BJ (cell line): ENCODE measurements at regions of chr12 and their contacts with region 1.

Region 1: DNA sequence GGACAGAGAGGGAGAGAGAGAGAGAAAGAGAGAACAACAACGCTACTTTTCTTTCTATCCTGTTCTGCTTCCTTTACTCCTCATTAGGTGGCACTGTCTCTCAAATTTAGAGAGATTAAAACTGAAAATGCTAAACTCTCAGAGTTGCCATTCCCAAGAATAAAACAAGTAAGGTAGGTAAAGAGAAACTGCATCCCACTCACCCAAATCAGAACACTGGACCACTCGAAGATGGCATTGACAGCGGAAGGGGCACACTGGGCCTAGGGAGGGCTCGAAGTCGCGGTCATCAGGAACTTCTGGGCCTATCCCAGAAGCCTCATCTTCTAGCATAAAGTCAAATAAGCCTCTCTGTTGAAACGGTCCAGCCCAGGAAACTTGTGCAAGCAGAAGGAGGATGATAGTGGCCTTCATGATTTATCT is 4.5 kb downstream of the DCN start:
- DNase-seq: no peak
- H3K4me3 ChIP-seq: peak overlapping the region; percentile 35
- H3K27me3 ChIP-seq: no peaks in the 10 kb centered on the region
- CTCF ChIP-seq: peak; percentile 67

Region 2: DNA sequence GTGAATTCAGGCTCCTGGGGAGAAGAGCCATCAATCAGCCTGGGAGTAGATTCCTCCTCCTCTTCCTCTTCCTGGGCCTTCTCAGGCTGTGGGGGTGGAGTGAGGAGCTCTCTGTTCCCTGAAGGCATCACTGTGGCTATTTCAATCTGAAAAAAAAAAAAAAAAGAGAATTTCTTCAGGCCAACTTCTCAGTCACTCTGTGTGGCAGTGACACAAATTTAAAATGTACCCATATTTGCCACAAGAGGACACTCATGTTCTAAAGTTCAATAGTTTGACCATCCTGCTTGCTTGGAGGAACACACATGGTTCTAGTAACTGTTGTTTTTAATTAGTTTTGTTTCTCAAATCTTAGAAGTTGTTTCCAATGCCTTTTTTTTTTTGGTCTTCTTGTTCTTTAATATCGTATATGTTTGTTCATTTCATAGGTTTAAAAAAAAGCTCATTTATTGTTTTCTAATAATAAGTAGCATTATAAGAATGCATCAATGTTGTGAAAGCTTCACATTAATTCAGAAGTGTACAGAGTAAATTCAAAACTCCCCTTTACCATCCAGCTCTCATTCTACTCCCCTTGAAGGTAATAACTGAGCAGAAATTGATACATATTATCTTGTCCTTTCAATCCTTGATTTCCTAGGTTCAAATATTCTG is 199.9 kb before region 1 on chr12:
- CTCF ChIA-PET with region 1: interaction called, 15 read pairs
- POLR2A ChIA-PET with region 1: no interaction called
- DNase-seq: peak; percentile 46
- H3K4me3 ChIP-seq: no peak overlapping the region
- H3K27me3 ChIP-seq: no peaks in the 10 kb centered on the region
- CTCF ChIP-seq: peak; percentile 75

Region 3: GRCh38 chr12:91133871-91134270 is 44.3 kb before region 1 on chr12:
- CTCF ChIA-PET with region 1: no interaction called
- POLR2A ChIA-PET with region 1: no interaction called
- DNase-seq: peak; percentile 92
- H3K4me3 ChIP-seq: no peak overlapping the region
- H3K27me3 ChIP-seq: no peaks in the 10 kb centered on the region
- CTCF ChIP-seq: no peak

Region 4: DNA sequence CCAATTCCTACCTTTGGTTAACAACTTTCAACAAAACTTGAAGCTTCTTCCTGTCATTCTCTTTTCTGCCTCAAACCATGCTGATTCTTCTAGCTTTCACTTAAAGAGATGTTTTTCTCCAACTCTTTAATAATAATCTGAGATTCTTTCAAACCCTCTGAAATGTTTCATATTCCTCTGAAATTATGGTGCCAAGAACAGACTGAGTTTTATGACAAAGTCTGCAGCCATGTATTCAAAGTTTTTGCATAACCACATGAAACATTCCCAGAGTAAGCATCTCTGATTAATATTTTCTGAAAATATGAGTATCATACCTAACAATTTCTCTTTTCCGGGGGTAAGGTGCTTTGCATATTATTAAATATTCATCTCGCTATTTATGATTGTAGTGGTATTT is 63.6 kb after region 1 on chr12:
- CTCF ChIA-PET with region 1: interaction called, 34 read pairs
- POLR2A ChIA-PET with region 1: no interaction called
- DNase-seq: no peak
- H3K4me3 ChIP-seq: no peak overlapping the region
- H3K27me3 ChIP-seq: no peaks in the 10 kb centered on the region
- CTCF ChIP-seq: no peak

Region 5: GRCh38 chr12:91326058-91327027 is 148.2 kb after region 1 on chr12:
- CTCF ChIA-PET with region 1: interaction called, 43 read pairs
- POLR2A ChIA-PET with region 1: interaction called, 3 read pairs
- DNase-seq: no peak
- H3K4me3 ChIP-seq: no peak overlapping the region
- H3K27me3 ChIP-seq: no peaks in the 10 kb centered on the region
- CTCF ChIP-seq: peak; percentile 73